Psoas muscle (tissue), 8 donors: ENCODE measurements at regions of chr20 and their contacts with region 1.

Region 1: DNA sequence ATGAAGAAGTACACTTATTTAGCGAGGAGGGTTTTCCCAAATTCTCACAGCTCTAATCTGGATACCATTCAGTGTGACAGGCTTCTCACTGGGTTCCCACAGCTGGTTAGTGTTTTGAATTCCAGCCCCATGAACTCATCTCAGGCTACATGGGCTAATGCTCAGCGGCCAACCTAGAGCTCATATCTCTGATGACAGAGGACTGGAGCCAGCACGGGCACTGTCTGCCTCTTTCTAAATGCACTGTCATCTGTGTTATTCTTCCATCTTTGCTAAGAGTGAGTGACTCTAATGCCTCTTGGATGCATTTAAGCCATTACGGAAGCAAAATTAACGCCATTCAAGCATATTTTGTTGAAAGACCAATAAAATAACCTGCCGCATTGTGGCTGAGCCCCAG is 308.9 kb upstream of the JAG1 start:
- DNase-seq: peak; percentile 70 to 85
- ATAC-seq: peak; percentile 80 to 93 (median 90)
- H3K4me3 ChIP-seq: peak overlapping the region; percentile 51
- H3K27ac ChIP-seq: peak overlapping the region; percentile 90
- H3K4me1 ChIP-seq: peaks cover 51% of the 10 kb centered on the region
- H3K27me3 ChIP-seq: no peaks in the 10 kb centered on the region
- CTCF ChIP-seq: no peak

Region 2: GRCh38 chr20:11067359-11067758 is 84.7 kb after region 1 on chr20:
- intact Hi-C with region 1: loop called in 1 of 2 experiments (anchors 10 kb)
- DNase-seq: no peak
- ATAC-seq: peak in 2 of 4 donors; percentile 67 to 83
- H3K4me3 ChIP-seq: no peak overlapping the region
- H3K27ac ChIP-seq: no peak overlapping the region
- H3K4me1 ChIP-seq: peaks cover 10% of the 10 kb centered on the region
- H3K27me3 ChIP-seq: no peaks in the 10 kb centered on the region
- CTCF ChIP-seq: no peak

Region 3: DNA sequence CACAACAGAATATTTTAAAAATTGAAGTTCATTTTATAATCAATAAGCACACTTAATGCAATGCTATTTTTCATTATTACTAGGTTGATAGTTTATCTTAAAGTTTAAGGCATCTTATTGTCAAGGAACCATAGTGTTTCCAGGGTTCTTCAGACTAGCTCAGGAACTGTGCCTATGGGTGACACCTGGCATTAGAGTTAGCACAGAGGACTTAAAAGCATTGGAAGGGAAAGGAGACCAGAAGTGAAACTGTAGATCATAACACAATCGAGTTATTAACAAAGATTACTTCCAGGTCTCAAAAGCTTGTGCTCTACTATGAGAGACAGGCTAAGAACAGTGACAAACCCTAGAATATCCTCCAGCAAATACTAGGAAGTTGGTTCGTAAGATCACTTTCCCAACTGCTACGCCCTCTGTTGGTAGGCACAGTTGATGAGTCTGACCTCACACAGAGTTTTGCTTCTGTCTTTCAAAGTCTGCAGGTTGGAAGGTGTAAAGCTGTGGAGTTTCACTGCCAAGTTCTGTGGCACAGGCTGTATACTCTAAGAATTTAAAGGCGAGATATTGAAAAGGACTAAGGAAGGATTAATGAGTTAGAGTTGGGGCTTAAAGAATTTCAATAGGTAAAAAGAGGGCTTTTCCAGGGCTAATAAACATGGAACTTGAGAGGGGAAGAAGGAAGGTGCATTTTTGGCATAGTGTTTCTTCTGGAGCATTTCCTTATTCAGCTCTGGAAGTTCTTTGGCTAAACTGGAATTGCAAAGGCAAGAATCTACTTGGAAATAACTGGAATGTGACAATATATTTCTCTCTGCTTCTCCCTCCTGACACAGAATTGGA is 222.5 kb after region 1 on chr20:
- intact Hi-C with region 1: loop called in 1 of 2 experiments (anchors 10 kb)
- DNase-seq: peak; percentile 30 to 52
- ATAC-seq: peak; percentile 84 to 96 (median 91)
- H3K4me3 ChIP-seq: no peak overlapping the region
- H3K27ac ChIP-seq: no peak overlapping the region
- H3K4me1 ChIP-seq: no peaks in the 10 kb centered on the region
- H3K27me3 ChIP-seq: no peaks in the 10 kb centered on the region
- CTCF ChIP-seq: peak; percentile 76